Mammary epithelial cell (primary cell): ENCODE measurements at regions of chr7 and their contacts with region 1.

Region 1: DNA sequence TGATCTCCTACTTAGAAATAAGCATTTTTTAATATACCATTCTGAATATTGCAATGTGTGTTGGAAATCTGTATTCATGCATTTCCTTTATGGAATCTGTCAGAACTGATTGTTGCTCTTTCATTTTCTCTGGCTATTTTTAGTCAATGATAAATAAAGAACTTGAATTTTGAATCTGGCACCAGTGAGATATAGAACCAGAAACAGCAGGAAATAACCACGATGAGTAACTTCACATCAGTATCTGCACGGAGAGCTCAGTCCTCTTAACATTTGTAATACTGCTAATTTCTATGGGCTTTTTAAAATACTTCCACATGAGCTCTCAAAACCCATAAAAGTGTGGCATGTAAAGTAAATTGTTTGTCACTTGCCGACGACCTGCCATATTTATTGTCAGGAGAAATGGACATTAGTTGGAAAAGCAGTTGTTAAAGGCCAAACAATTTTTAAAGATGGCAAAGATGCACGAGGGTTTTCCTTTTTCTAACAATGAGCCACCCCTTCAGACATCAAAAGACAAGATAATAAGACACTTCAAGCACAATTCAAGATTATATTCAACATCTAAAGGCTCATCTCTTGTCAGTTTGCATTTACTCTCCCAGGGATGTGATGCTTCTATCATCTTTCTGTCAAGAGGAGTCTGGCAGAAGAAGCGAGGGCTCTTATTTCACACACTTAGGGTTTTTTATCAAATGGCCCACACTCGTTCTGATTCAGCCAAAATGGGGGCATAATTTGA is 118.3 kb downstream of the POU6F2 start:
- DNase-seq: no peak
- H3K4me3 ChIP-seq: no peak overlapping the region
- H3K27ac ChIP-seq: no peak overlapping the region
- H3K4me1 ChIP-seq: no peaks in the 10 kb centered on the region
- H3K27me3 ChIP-seq: peaks cover 2% of the 10 kb centered on the region
- CTCF ChIP-seq: no peak

Region 2: DNA sequence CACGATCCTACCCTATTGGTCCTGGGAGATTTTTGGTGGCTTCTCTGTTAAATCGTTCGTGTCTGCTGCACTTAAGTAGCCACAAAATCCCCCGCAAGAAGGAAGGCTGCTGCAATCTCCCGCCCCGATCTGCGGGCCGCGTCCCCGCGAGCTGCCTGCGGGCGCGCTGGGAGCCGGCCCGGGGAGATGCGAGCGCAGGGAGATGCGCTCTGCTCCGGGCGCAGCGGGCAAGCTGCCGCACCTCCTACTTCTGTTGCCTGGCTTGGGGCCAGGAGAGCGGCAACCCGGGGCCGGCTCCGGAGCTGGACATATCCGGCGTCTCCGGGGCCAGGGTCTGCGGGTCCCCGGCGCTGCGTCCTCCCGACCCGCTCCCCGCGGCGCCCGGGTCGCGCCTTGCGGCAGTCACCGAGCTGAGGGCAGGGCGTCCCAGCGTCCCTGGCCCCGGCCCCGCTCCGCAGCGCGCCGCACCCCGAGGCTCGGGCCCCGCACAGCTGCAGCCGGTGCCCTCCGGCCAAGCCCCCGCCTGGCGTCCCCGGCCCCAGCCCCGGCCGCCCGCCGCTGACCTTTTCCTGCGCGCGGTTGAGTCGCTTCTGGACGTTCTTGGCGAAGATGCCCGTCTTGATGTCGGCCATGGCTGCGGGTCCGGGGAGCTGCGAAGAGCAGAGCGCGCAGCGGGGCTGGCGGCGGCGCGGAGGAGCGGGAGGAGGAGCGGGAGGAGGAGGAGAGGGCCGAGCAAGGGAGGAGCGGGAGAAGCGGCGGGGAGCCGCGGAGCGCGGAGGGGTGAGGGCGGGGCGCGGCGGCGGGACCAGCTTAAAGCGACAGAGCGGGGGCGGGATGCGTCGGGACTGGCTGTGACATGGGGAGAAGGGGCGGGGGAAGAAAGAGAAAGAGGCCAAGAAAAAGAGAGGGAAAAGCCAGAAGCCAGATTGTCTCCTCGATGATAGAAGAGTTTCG is 465.1 kb before region 1 on chr7 and contains the start of gene AMPH:
- CTCF ChIA-PET with region 1: no interaction called
- dilution Hi-C with region 1: no loop called
- in situ Hi-C with region 1: no loop called
- intact Hi-C with region 1: no loop called
- DNase-seq: peak; percentile 17
- H3K4me3 ChIP-seq: peak within 1 kb of the TSS in 2 of 3 experiments; percentile 36 to 42
- H3K27ac ChIP-seq: no peak within 1 kb of the TSS
- H3K4me1 ChIP-seq: peaks cover 4% of the 10 kb centered on the region
- H3K27me3 ChIP-seq: peaks cover 28% of the 10 kb centered on the region
- CTCF ChIP-seq: no peak
- total RNA-seq, gene AMPH: under 0.01 TPM in 1 of 2 donors, not detected in the other

Region 3: DNA sequence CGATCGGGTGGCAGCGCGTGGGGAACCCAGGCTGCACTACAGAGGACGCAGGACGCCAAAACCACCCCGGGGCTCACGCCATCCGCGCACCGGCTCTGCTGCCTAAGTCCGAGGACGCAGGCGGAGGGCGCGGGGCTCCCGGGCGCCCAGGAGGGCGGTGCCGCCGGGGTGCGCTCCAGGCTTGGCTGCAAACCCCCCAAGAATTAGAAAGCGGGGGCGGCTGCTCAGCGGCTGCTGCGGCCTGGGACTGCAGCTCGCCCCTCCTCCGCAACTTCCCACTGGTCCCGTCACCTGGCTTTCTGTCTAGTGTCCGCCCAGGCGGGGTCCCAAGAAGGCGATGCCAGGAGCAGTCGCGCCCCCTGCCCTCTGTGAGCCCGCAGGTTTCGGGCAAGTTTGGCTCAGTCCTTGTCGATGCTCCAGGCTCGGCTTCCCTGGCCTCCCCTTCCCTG is 120.1 kb before region 1 on chr7:
- CTCF ChIA-PET with region 1: no interaction called
- dilution Hi-C with region 1: no loop called
- in situ Hi-C with region 1: no loop called
- intact Hi-C with region 1: no loop called
- DNase-seq: no peak
- H3K4me3 ChIP-seq: no peak overlapping the region
- H3K27ac ChIP-seq: no peak overlapping the region
- H3K4me1 ChIP-seq: no peaks in the 10 kb centered on the region
- H3K27me3 ChIP-seq: peaks cover 13% of the 10 kb centered on the region
- CTCF ChIP-seq: no peak

Region 4: GRCh38 chr7:39027491-39027890 is 68.6 kb before region 1 on chr7:
- CTCF ChIA-PET with region 1: no interaction called
- dilution Hi-C with region 1: no loop called
- in situ Hi-C with region 1: no loop called
- intact Hi-C with region 1: no loop called
- DNase-seq: no peak
- H3K4me3 ChIP-seq: no peak overlapping the region
- H3K27ac ChIP-seq: no peak overlapping the region
- H3K4me1 ChIP-seq: no peaks in the 10 kb centered on the region
- H3K27me3 ChIP-seq: no peaks in the 10 kb centered on the region
- CTCF ChIP-seq: no peak

Region 5: DNA sequence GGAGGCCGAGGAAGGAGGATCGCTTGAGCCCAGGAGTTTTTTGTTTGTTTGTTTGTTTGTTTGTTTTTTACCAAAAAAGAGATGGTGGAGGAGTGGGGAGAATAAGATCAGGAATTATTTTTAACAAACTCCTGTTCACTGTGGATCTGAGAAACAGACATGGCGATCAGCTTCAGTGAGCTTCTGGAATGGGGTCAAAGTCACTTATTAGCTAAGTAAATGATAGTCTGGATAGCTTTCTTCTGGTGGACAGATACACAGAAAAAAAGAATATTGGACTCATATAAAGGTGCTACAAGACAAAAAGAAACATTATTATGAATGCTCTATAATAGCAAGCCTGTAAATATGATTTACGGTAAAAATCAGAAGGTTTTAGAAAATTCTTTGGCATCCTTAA is 33.2 kb before region 1 on chr7:
- CTCF ChIA-PET with region 1: no interaction called
- dilution Hi-C with region 1: loop called (anchors 5 kb)
- in situ Hi-C with region 1: no loop called
- intact Hi-C with region 1: no loop called
- DNase-seq: no peak
- H3K4me3 ChIP-seq: no peak overlapping the region
- H3K27ac ChIP-seq: no peak overlapping the region
- H3K4me1 ChIP-seq: no peaks in the 10 kb centered on the region
- H3K27me3 ChIP-seq: no peaks in the 10 kb centered on the region
- CTCF ChIP-seq: no peak

Region 6: DNA sequence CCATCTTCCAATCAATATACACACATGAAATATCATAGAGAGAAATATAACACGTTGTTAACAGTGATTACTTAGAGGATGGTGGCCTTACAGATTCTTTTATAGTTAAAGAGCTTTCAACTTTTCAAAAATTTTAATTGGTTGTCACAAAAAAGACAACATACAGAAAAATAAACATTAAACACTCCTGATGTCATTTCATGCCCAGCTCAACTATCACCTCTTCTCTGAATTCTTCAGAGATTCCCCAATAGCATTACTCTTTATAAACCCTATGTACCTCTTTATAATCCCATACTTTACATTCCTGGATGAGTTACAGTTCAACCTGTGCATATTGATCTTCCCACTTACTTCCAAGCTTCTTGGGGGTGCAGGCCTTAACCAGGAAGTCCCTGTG is 41.4 kb after region 1 on chr7:
- CTCF ChIA-PET with region 1: no interaction called
- dilution Hi-C with region 1: loop called (anchors 5 kb)
- in situ Hi-C with region 1: no loop called
- intact Hi-C with region 1: no loop called
- DNase-seq: no peak
- H3K4me3 ChIP-seq: no peak overlapping the region
- H3K27ac ChIP-seq: no peak overlapping the region
- H3K4me1 ChIP-seq: no peaks in the 10 kb centered on the region
- H3K27me3 ChIP-seq: no peaks in the 10 kb centered on the region
- CTCF ChIP-seq: no peak